Astrocyte of the cerebellum (primary cell): ENCODE measurements at regions of chr13 and their contacts with region 1.

Region 1: DNA sequence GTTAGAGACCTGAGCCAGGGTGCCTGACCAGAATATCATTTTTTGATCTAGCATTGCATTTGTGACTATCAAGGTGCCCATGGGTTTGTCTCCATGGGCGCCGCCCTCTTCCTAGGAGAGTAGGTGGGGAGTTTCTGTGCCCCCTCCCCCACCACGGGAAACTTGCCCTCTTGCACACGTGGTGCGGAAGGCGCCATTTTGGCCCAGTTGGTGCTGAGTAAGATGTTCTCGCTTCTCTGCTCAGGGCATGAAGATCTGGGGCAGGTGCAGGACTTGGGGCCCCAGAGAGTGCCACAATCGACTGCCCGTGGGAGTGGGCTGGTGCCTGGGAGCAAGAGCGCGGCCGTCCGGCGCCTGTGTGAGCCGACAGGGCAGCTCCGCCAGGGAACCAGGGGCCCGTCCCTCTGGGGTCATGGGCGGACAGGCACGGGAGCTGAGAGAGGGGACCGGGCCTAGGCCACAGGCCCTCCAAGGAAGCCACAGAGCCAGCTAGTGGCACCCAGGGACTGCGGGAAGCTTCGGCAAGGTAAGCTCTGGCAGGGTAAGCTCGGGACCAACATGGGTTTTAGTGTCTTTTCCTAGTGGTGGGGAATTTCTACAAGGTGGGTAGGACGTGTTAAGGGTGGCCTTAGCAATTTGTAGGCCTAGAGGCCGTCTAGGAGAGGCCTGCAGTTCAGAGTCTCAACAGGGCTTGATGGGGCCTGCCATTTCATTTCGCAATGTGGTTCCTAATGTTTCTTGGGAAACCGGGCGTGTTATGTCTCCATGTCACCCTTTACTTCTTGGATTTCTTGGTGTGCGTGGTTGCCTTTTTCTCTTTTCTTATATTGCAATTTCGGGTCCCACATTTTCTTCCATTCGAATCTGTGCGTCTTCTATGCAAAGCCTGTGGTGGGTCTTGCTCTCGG is 14.5 kb downstream of the SACS start:
- DNase-seq: no peak
- H3K4me3 ChIP-seq: no peak overlapping the region
- CTCF ChIP-seq: no peak

Region 2: DNA sequence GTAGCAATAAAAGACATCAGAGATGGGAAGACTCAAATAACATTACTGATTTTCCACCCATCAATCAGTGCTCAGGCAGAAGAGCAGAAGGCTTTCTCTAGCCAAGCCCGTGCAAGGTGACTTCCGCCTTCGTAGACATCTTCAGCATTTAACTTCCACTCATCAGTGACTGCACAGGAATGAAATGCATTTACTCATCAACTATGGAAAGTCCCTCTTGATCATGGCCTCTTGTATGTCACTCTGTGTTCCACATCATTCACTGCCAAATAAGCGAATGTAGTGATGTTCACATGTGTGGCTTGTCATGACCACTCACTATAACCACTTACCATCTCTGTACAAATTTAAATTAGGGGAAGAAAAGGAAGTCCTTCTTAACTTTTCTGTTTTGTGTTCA is 34.9 kb before region 1 on chr13:
- in situ Hi-C with region 1: loop called (anchors 5 kb)
- DNase-seq: no peak
- H3K4me3 ChIP-seq: no peak overlapping the region
- CTCF ChIP-seq: no peak